ENCODE measurements at regions of chr16 and their contacts with region 1.

Region 1: GRCh38 chr16:48687421-48688038 is 77.5 kb upstream of the N4BP1 start:
- DNase-seq: peak; percentile 27 to 63 (median 42)
- ATAC-seq: peak in 3 of 4 donors; percentile 81 to 84 (median 82)
- H3K4me3 ChIP-seq: no peak overlapping the region
- H3K27ac ChIP-seq: no peak overlapping the region
- H3K4me1 ChIP-seq: peaks cover 0 to 5% (median 0%) of the 10 kb centered on the region in 12 donors
- H3K27me3 ChIP-seq: no peaks in the 10 kb centered on the region
- CTCF ChIP-seq: peak; percentile 65 to 84 (median 73)
- POLR2A ChIP-seq: no peak

Region 2: DNA sequence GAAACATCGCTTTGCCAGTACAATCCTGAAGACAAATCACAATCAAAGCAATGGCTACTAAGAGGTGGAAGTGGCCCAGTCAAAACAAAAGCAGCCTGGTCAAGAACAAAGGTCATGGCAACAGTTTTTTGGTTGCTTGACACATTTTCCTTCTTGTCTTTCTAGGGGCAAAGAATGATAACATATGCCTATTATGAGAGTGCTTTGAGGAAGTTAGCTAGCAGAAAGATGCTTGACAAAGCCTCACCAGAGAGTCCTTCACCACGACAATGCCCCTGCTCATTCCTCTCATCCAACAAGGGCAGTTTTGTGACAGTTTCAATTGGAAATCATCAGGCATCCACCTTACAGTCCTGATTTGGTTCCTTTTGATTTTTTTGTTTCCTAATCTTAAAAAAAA is 45.8 kb before region 1 on chr16:
- intact Hi-C with region 1: no loop called
- DNase-seq: no peak
- ATAC-seq: no peak
- H3K4me3 ChIP-seq: no peak overlapping the region
- H3K27ac ChIP-seq: no peak overlapping the region
- H3K4me1 ChIP-seq: no peaks in the 10 kb centered on the region
- H3K27me3 ChIP-seq: no peaks in the 10 kb centered on the region
- CTCF ChIP-seq: no peak
- POLR2A ChIP-seq: no peak

Region 3: GRCh38 chr16:48901712-48902374 is 214.3 kb after region 1 on chr16:
- intact Hi-C with region 1: loop called in 1 of 10 experiments (anchors 10 kb)
- DNase-seq: no peak
- ATAC-seq: no peak
- H3K4me3 ChIP-seq: no peak overlapping the region
- H3K27ac ChIP-seq: no peak overlapping the region
- H3K4me1 ChIP-seq: no peaks in the 10 kb centered on the region
- H3K27me3 ChIP-seq: peaks cover 0 to 33% (median 4%) of the 10 kb centered on the region in 9 donors
- CTCF ChIP-seq: peak in 1 of 12 donors; percentile 7
- POLR2A ChIP-seq: no peak

Region 4: DNA sequence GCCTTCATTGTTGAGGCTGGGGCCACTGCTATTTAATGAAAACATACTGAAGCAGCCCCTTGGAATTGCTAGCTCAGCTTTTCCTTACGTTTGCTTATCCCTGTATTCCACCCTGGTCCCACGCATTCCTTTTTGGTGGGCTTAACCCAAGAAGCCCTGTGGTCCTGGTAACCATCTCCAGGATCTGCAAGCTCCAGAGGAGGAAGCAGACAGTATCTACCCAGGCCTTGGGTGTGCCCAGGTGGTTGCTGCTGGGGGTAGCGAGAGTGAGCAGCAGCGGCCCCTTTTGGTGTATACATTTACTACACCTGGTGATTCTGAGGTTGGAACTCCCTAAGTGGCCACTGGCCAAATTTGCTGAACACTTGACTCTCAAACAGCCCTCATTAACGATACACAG is 496.4 kb after region 1 on chr16:
- intact Hi-C with region 1: loop called in 1 of 10 experiments (anchors 10 kb)
- DNase-seq: no peak
- ATAC-seq: peak in 3 of 4 donors; percentile 61 to 69 (median 62)
- H3K4me3 ChIP-seq: no peak overlapping the region
- H3K27ac ChIP-seq: no peak overlapping the region
- H3K4me1 ChIP-seq: no peaks in the 10 kb centered on the region
- H3K27me3 ChIP-seq: no peaks in the 10 kb centered on the region
- CTCF ChIP-seq: peak in 9 of 12 donors; percentile 24 to 51 (median 34)
- POLR2A ChIP-seq: no peak